AG04450 (cell line): ENCODE measurements at regions of chr4 and their contacts with region 1.

Region 1: DNA sequence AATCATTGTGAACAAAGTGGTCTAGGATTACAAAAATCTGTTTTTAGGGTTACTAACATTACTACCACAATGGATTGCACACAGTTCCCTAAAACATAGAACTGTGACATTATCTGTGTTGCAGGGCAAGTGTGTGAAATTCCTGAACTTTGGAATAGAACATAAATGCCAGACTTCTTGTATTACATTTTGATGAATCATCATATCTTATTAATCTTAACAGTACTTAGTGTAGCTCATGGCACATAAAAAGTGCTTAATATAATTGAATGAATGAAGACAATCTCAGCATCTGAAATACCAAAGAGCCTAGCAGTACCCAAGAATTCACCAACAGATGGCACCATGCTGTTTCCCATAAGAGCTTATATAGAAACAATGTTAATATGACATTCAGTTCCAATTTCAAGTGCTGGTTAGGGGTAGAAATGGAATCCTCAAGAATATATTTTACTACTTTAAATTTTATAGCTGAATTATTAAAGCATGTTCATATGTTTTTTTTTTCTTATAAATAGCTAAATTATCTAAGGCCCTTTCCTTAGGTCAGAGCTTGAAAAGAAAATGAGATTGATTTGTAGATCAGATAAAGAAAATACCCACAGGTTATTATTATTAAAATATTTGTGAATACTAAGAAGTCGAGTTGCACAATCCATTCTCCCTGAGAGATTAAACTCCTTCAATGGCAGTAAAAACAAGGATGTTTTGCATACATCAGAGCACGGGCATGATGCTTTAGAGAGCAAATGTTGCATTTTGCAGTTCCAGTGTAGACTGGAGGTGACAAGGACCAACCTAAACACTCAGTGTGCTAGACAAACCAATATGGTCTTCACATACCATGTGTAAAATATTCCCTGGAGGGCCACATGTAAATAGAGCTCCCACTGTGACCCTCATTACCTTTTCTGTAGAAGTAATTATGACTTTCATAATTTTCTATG is 25.7 kb upstream of the SHISA3 start:
- DNase-seq: peak; percentile 24
- H3K4me3 ChIP-seq: no peak overlapping the region
- H3K27ac ChIP-seq: no peak overlapping the region
- H3K27me3 ChIP-seq: no peaks in the 10 kb centered on the region
- CTCF ChIP-seq: peak; percentile 64

Region 2: GRCh38 chr4:42282081-42282901 is 89.3 kb before region 1 on chr4:
- CTCF ChIA-PET with region 1: interaction called, 14 read pairs
- POLR2A ChIA-PET with region 1: no interaction called
- DNase-seq: peak; percentile 29
- H3K4me3 ChIP-seq: no peak overlapping the region
- H3K27ac ChIP-seq: no peak overlapping the region
- H3K27me3 ChIP-seq: no peaks in the 10 kb centered on the region
- CTCF ChIP-seq: peak; percentile 69

Region 3: GRCh38 chr4:42359711-42360110 is 11.9 kb before region 1 on chr4:
- CTCF ChIA-PET with region 1: interaction called, 16 read pairs
- POLR2A ChIA-PET with region 1: no interaction called
- DNase-seq: peak; percentile 6
- H3K4me3 ChIP-seq: peak overlapping the region; percentile 42
- H3K27ac ChIP-seq: no peak overlapping the region
- H3K27me3 ChIP-seq: no peaks in the 10 kb centered on the region
- CTCF ChIP-seq: no peak

Region 4: DNA sequence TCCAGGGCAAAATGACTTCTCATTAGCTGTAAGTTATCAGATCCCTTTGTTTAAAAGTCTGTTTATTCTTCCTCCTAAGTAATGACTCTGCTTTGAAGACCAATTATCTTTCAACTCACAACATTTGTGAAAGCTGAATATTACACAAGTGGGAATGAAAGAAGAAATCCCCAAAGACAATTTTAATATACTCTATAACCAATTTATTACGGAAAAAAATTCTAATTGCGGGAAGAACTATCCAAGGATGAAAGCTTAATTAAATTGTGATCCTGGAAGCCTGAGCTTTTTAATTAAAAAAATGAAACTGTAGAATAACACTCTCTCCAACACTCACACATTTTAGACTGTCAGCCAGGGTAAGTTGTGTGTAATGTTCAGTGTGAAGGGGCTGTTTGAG is 10.1 kb after region 1 on chr4:
- CTCF ChIA-PET with region 1: interaction called, 16 read pairs
- POLR2A ChIA-PET with region 1: no interaction called
- DNase-seq: no peak
- H3K4me3 ChIP-seq: no peak overlapping the region
- H3K27ac ChIP-seq: no peak overlapping the region
- H3K27me3 ChIP-seq: no peaks in the 10 kb centered on the region
- CTCF ChIP-seq: no peak

Region 5: GRCh38 chr4:42512226-42512625 is 140.6 kb after region 1 on chr4:
- CTCF ChIA-PET with region 1: interaction called, 225 read pairs
- POLR2A ChIA-PET with region 1: no interaction called
- DNase-seq: no peak
- H3K4me3 ChIP-seq: no peak overlapping the region
- H3K27ac ChIP-seq: no peak overlapping the region
- H3K27me3 ChIP-seq: no peaks in the 10 kb centered on the region
- CTCF ChIP-seq: no peak

Region 6: DNA sequence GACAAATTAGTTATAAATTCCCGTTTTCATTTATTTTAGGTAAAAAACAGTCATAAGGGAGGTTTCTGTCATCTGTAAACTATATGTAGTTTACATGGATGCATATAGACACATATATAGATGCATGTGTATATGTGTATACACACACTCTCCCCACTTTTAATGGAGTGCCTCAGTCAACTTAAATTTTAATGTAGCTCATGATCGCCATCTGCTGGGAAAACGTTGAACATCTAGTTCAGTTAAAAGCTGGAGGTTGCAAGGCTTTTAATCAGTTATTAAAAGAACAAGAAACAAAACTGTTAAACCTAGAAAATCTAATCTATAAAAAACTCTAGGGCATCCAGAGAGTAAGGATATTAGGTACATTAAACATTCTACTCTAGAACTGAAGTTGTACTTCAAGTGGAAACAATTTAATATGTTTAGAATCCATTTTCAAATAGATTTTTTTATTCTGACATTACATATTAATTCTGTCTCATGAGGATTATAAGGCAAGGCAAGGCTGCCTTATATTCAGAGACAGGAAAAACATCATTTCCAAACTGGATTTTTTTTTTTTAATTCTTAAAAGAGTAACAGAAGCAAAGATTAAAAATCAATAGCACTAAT is 148.3 kb after region 1 on chr4:
- CTCF ChIA-PET with region 1: interaction called, 225 read pairs
- POLR2A ChIA-PET with region 1: no interaction called
- DNase-seq: peak; percentile 7
- H3K4me3 ChIP-seq: no peak overlapping the region
- H3K27ac ChIP-seq: no peak overlapping the region
- H3K27me3 ChIP-seq: no peaks in the 10 kb centered on the region
- CTCF ChIP-seq: peak; percentile 70

Region 7: DNA sequence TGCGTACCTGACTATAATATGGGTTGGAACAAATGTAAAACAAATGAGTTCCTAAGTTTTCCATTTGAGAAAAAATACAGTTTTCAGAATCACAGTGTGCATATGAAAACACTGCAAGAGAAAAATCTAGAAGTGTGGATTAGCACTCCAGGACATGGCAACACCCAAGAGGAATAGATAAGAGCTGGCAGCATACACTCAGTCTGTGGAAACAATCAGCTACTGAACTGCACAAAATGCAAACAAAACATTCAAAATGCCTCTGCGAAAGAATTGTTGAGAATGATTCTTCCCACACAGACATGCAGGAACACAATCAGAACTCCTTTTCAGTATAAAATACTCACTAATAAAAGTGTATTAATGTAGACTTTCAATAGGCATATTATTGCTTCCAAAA is 245.5 kb after region 1 on chr4:
- CTCF ChIA-PET with region 1: no interaction called
- POLR2A ChIA-PET with region 1: no interaction called
- DNase-seq: no peak
- H3K4me3 ChIP-seq: no peak overlapping the region
- H3K27ac ChIP-seq: no peak overlapping the region
- H3K27me3 ChIP-seq: no peaks in the 10 kb centered on the region
- CTCF ChIP-seq: no peak